ENCODE measurements at regions of chr10 and their contacts with region 1.

Region 1: DNA sequence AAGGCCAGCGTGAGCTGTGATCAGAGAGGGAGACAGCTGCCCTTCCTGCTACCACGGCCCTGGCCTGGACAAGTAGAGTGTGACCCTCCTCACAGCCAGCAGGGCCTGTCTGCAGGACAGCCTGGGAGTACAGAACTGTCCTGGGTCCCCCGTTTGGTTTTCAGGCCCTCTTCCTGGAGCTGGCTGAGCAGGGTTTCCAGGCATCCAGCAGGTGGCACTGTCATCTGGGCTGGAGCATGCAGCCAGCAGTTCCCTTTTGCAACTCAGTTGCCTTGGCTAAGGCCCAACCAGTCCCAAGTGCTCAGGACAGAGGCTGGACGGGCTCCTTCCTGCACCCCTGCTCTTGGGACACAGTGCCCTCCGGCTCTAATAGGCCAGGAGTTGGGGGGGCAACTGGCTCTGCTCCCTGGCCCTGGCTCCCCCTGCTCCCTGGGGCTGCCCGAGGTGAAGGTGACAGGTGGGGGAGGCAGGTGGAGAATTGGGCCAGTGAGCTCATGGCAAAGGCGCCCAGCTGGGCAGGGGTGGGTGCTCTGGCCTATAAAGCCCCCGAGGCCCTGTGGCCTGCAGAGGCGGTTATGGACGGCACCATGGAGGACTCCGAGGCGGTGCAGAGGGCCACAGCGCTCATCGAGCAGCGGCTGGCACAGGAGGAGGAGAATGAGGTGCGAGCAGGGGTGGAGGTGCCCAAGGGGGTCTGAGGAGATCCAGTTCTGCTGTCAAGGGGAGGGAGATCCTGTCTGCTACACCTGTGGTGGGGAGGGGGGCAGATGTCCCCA is at the start of gene ANKRD2:
- DNase-seq: peak; percentile 66
- ATAC-seq: peak; percentile 91
- H3K4me3 ChIP-seq: no peak within 1 kb of the TSS
- H3K27ac ChIP-seq: no peak within 1 kb of the TSS
- H3K4me1 ChIP-seq: peaks cover 17% of the 10 kb centered on the region
- H3K27me3 ChIP-seq: no peaks in the 10 kb centered on the region
- CTCF ChIP-seq: peak; percentile 97
- EP300 ChIP-seq: no peak
- POLR2A ChIP-seq: no peak
- RAD21 ChIP-seq: peak; percentile 95
- total RNA-seq, gene ANKRD2: not detected in 2 replicates

Region 2: GRCh38 chr10:97445722-97446639 is 126.4 kb before region 1 on chr10 and contains the starts of genes EXOSC1 and ZDHHC16:
- CTCF ChIA-PET with region 1: no interaction called
- POLR2A ChIA-PET with region 1: no interaction called
- in situ Hi-C with region 1: no loop called
- intact Hi-C with region 1: no loop called
- DNase-seq: peak; percentile 97
- ATAC-seq: peak; percentile 95
- H3K4me3 ChIP-seq: peak within 1 kb of the TSS; percentile 83 to 99 (median 93)
- H3K27ac ChIP-seq: peak within 1 kb of the TSS; percentile 60
- H3K4me1 ChIP-seq: peaks cover 43% of the 10 kb centered on the region
- H3K27me3 ChIP-seq: no peaks in the 10 kb centered on the region; a peak in 1 of 5 replicates
- CTCF ChIP-seq: peak; percentile 42
- EP300 ChIP-seq: no peak; a peak in 1 of 4 replicates
- POLR2A ChIP-seq: peak; percentile 73 to 84
- RAD21 ChIP-seq: peak; percentile 3; the same call in 1 of the 2 replicates
- total RNA-seq, gene EXOSC1: 39.9 and 47.6 TPM in 2 replicates
- total RNA-seq, gene ZDHHC16: 30.2 and 41.8 TPM in 2 replicates

Region 3: DNA sequence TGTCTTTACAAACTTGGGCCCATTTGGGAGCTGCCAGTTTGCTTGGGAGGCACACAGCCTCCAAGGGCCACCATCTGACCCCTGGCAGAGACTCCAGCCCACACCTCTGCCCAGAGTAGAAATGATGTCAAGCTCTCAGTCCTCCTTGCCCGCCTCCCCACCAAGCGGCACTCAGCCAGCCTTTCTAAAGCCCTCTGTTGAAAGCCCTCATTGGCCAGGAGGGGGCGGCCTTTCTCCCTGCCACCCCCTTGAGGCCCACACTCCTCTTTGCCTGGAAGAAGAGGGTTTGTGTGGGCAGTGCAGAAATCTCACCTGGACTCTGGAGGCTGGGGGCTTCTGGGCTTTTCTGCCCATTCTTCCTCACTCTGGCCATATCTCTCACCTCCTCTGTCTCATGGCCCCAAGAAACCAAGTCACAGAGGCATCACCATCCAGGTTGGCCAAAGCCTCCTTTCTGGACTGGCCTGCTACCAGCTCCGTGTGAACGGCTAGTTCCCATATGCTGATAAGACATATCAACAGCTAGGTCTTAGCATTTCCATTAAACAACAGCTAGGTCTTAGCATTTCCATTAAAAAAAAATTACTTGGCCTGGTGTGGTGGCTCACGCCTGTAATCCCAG is 37.5 kb before region 1 on chr10:
- CTCF ChIA-PET with region 1: no interaction called
- POLR2A ChIA-PET with region 1: no interaction called
- in situ Hi-C with region 1: no loop called
- intact Hi-C with region 1: loop called (anchors 1 kb)
- DNase-seq: peak; percentile 44
- ATAC-seq: peak; percentile 94
- H3K4me3 ChIP-seq: no peak overlapping the region
- H3K27ac ChIP-seq: no peak overlapping the region
- H3K4me1 ChIP-seq: peaks cover 7% of the 10 kb centered on the region
- H3K27me3 ChIP-seq: no peaks in the 10 kb centered on the region
- CTCF ChIP-seq: peak; percentile 83
- EP300 ChIP-seq: no peak
- POLR2A ChIP-seq: no peak
- RAD21 ChIP-seq: peak; percentile 41; the same call in 1 of the 2 replicates

Region 4: GRCh38 chr10:97584060-97584797 is 11.8 kb after region 1 on chr10 and contains the start of gene HOGA1:
- CTCF ChIA-PET with region 1: no interaction called
- POLR2A ChIA-PET with region 1: interaction called, 14 read pairs
- in situ Hi-C with region 1: no loop called
- intact Hi-C with region 1: no loop called
- DNase-seq: peak; percentile 91
- ATAC-seq: peak; percentile 97
- H3K4me3 ChIP-seq: peak within 1 kb of the TSS; percentile 48 to 72 (median 54)
- H3K27ac ChIP-seq: peak within 1 kb of the TSS; percentile 69
- H3K4me1 ChIP-seq: peaks cover 60% of the 10 kb centered on the region
- H3K27me3 ChIP-seq: peaks cover 0 to 12% of the 10 kb centered on the region in 2 experiments; a peak in 1 of 5 replicates
- CTCF ChIP-seq: no peak
- EP300 ChIP-seq: no peak
- POLR2A ChIP-seq: peak; percentile 42 to 53; a peak in 3 of 4 replicates
- RAD21 ChIP-seq: no peak
- total RNA-seq, gene HOGA1: 18.8 and 19.5 TPM in 2 replicates

Region 5: GRCh38 chr10:97612386-97612785 is 40.0 kb after region 1 on chr10:
- CTCF ChIA-PET with region 1: interaction called, 46 read pairs
- POLR2A ChIA-PET with region 1: no interaction called
- in situ Hi-C with region 1: loop called (anchors 5 kb)
- intact Hi-C with region 1: loop called (anchors 1 kb)
- DNase-seq: peak; percentile 45
- ATAC-seq: peak; percentile 91
- H3K4me3 ChIP-seq: no peak overlapping the region
- H3K27ac ChIP-seq: no peak overlapping the region
- H3K4me1 ChIP-seq: no peaks in the 10 kb centered on the region
- H3K27me3 ChIP-seq: no peaks in the 10 kb centered on the region
- CTCF ChIP-seq: peak; percentile 72
- EP300 ChIP-seq: no peak
- POLR2A ChIP-seq: no peak
- RAD21 ChIP-seq: peak; percentile 68

Region 6: DNA sequence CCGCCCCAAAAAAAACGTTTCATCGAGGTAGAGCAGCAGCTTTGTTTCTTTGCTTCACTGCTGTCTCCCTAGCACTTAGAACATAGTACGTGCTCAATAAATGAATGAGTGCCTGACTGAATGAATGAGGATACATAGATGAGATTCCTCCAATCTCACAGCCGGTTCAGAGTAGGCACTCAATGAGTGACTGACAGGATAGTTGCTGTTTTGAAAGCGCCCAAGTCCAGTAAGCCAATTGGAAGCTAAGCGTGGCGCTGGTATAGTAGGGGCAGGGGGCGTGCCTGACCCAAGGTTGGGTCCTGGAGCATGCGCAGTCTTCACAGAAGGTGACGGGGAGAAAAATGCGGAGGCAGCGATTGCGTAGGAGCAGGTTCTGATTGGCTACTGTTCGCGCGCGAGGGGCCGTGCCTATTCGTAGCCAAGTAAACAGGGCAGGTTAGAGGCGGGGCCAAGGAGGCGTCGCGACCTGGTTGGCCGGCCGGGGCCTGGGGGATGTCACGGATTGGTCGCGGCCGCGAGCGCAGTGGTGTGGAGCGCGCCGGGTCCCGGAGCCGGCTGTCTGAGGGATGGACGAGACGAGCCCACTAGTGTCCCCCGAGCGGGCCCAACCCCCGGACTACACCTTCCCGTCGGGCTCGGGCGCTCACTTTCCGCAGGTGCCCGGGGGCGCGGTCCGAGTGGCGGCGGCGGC is 67.9 kb after region 1 on chr10 and contains the start of gene PI4K2A:
- CTCF ChIA-PET with region 1: no interaction called
- POLR2A ChIA-PET with region 1: interaction called, 10 read pairs
- in situ Hi-C with region 1: no loop called
- intact Hi-C with region 1: no loop called
- DNase-seq: peak; percentile 98
- ATAC-seq: peak; percentile 99
- H3K4me3 ChIP-seq: peak within 1 kb of the TSS; percentile 81 to 91 (median 89)
- H3K27ac ChIP-seq: peak within 1 kb of the TSS; percentile 52
- H3K4me1 ChIP-seq: peaks cover 34% of the 10 kb centered on the region
- H3K27me3 ChIP-seq: no peaks in the 10 kb centered on the region
- CTCF ChIP-seq: no peak; the same call in 1 of the 2 replicates
- EP300 ChIP-seq: no peak
- POLR2A ChIP-seq: peak; percentile 54 to 57; a peak in 3 of 4 replicates
- RAD21 ChIP-seq: no peak
- total RNA-seq, gene PI4K2A: 14.3 and 16.6 TPM in 2 replicates

Measured in HepG2 (cell line).